Heart left ventricle (tissue), 16 donors: ENCODE measurements at regions of chr1 and their contacts with region 1.

Region 1: GRCh38 chr1:206106328-206107167 is 10.6 kb downstream of the AVPR1B start:
- DNase-seq: peak; percentile 75 to 86 (median 80)
- ATAC-seq: peak; percentile 66 to 88 (median 84)
- H3K4me3 ChIP-seq: no peak overlapping the region
- H3K27ac ChIP-seq: no peak overlapping the region
- H3K4me1 ChIP-seq: peaks cover 0 to 14% (median 0%) of the 10 kb centered on the region in 12 donors
- H3K27me3 ChIP-seq: no peaks in the 10 kb centered on the region
- CTCF ChIP-seq: peak; percentile 81 to 93 (median 88)
- POLR2A ChIP-seq: no peak

Region 2: GRCh38 chr1:205547936-205548827 is 558.4 kb before region 1 on chr1:
- intact Hi-C with region 1: no loop called
- DNase-seq: no peak
- ATAC-seq: no peak
- H3K4me3 ChIP-seq: no peak overlapping the region
- H3K27ac ChIP-seq: no peak overlapping the region
- H3K4me1 ChIP-seq: peaks cover 0 to 16% (median 11%) of the 10 kb centered on the region in 12 donors
- H3K27me3 ChIP-seq: peaks cover 0 to 23% (median 0%) of the 10 kb centered on the region in 9 donors
- CTCF ChIP-seq: no peak
- POLR2A ChIP-seq: no peak

Region 3: GRCh38 chr1:205658943-205659581 is 447.5 kb before region 1 on chr1:
- intact Hi-C with region 1: loop called in 2 of 10 experiments (anchors 5 to 10 kb)
- DNase-seq: peak; percentile 78 to 90 (median 83)
- ATAC-seq: peak; percentile 71 to 88 (median 80)
- H3K4me3 ChIP-seq: no peak overlapping the region
- H3K27ac ChIP-seq: no peak overlapping the region
- H3K4me1 ChIP-seq: peaks cover 0 to 16% (median 6%) of the 10 kb centered on the region in 12 donors
- H3K27me3 ChIP-seq: no peaks in the 10 kb centered on the region
- CTCF ChIP-seq: peak; percentile 77 to 91 (median 85)
- POLR2A ChIP-seq: no peak

Region 4: DNA sequence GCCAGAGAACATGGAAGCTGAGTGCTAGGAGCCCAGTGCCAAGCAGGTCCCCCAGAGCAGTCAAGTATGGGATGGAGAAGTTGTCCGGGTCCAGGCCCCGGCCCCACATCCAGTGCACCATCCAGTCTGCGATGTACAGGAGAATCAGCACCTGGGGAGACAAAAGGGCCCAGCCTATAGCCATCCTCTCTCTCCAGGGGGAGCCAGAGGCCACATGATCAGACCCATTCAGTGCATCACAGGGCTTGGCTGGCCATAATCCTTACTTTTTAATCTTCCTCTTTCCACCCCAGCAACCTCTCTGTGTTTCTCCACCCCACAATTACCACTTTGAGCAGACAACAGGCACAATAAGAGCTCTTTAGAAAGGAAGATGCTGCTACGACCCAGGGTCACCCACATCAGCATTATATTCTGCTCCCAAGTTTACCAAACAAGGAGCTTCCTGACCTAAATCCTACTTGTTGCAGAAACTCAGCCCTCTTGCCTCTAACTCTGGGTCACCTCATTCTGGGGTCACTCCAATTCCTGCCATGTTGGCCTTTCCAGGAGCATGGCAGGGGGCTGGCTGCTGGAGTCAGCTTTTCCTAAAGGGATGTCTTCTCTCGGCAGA is 314.9 kb before region 1 on chr1:
- intact Hi-C with region 1: loop called in 8 of 10 experiments (anchors 5 to 10 kb)
- DNase-seq: peak in 3 of 5 donors; percentile 60 to 69 (median 61)
- ATAC-seq: peak; percentile 55 to 71 (median 62)
- H3K4me3 ChIP-seq: no peak overlapping the region
- H3K27ac ChIP-seq: peak overlapping the region in 4 of 12 donors; percentile 1 to 25 (median 10)
- H3K4me1 ChIP-seq: peaks cover 0 to 23% (median 1%) of the 10 kb centered on the region in 12 donors
- H3K27me3 ChIP-seq: no peaks in the 10 kb centered on the region
- CTCF ChIP-seq: peak; percentile 49 to 82 (median 74)
- POLR2A ChIP-seq: no peak

Region 5: GRCh38 chr1:205798600-205798999 is 307.9 kb before region 1 on chr1:
- intact Hi-C with region 1: loop called in 8 of 10 experiments (anchors 5 to 10 kb)
- DNase-seq: no peak
- ATAC-seq: no peak
- H3K4me3 ChIP-seq: no peak overlapping the region
- H3K27ac ChIP-seq: peak overlapping the region in 2 of 12 donors; percentile 60 to 64
- H3K4me1 ChIP-seq: peaks cover 0 to 56% (median 21%) of the 10 kb centered on the region in 12 donors
- H3K27me3 ChIP-seq: no peaks in the 10 kb centered on the region
- CTCF ChIP-seq: no peak
- POLR2A ChIP-seq: no peak

Region 6: GRCh38 chr1:205919026-205919746 is 187.4 kb before region 1 on chr1:
- intact Hi-C with region 1: loop called in 9 of 10 experiments (anchors 1 to 10 kb)
- DNase-seq: peak in 4 of 5 donors; percentile 82 to 86 (median 84)
- ATAC-seq: peak; percentile 47 to 73 (median 56)
- H3K4me3 ChIP-seq: peak overlapping the region in 6 of 12 donors; percentile 0 to 44 (median 36)
- H3K27ac ChIP-seq: peak overlapping the region; percentile 68 to 94 (median 86)
- H3K4me1 ChIP-seq: peaks cover 0 to 66% (median 32%) of the 10 kb centered on the region in 12 donors
- H3K27me3 ChIP-seq: no peaks in the 10 kb centered on the region
- CTCF ChIP-seq: peak; percentile 79 to 96 (median 89)
- POLR2A ChIP-seq: no peak

Region 7: DNA sequence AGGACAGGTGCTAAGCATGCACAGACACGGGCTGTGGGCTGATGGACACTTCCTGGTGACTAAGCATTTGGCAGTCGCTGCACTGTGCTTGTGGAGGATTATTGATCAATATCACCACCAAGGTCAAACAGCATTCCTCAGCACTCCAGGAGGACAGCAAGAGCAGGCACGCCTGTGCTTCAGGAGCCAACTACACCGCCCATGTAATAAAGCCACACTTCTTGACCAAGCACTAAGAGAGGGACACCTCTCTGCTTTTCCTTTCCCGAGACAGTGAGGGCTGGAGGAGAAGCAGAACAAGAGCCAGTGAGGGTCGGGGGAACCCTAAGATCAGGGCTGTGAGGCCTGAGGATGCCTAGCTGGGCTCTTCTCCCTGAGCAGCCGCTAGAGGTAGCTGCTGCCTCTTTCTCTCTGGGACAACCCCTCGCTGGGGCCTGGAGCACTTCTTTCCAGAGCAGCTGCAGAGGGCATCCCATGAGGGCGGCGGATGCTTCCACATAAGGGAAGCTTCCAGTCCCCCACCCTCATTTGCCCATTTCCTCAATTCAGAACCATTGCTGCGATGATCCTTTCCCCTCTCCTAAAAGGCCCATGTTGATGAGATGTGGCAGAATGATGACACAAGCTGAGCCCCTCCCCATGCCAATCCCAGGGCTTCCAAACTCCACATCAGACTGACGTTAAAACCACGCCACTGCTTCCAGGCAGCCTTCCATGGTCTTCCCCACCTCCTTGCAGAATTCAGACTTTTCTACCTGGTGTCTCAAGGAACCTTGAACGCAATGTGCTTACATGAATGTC is 122.4 kb before region 1 on chr1:
- intact Hi-C with region 1: loop called (anchors 1 to 2 kb)
- DNase-seq: peak; percentile 72 to 83 (median 75)
- ATAC-seq: peak; percentile 53 to 86 (median 84)
- H3K4me3 ChIP-seq: no peak overlapping the region
- H3K27ac ChIP-seq: no peak overlapping the region
- H3K4me1 ChIP-seq: peaks cover 0 to 40% (median 17%) of the 10 kb centered on the region in 12 donors
- H3K27me3 ChIP-seq: no peaks in the 10 kb centered on the region
- CTCF ChIP-seq: peak; percentile 56 to 85 (median 76)
- POLR2A ChIP-seq: no peak

Region 8: GRCh38 chr1:206030714-206031113 is 75.8 kb before region 1 on chr1:
- intact Hi-C with region 1: loop called (anchors 1 to 10 kb)
- DNase-seq: peak in 4 of 5 donors; percentile 39 to 62 (median 54)
- ATAC-seq: peak in 3 of 4 donors; percentile 78 to 83 (median 80)
- H3K4me3 ChIP-seq: no peak overlapping the region
- H3K27ac ChIP-seq: no peak overlapping the region
- H3K4me1 ChIP-seq: peaks cover 0 to 13% (median 0%) of the 10 kb centered on the region in 12 donors
- H3K27me3 ChIP-seq: peaks cover 0 to 5% (median 0%) of the 10 kb centered on the region in 9 donors
- CTCF ChIP-seq: peak; percentile 34 to 86 (median 70)
- POLR2A ChIP-seq: no peak